ENCODE measurements at regions of chr11 and their contacts with region 1.

Region 1: GRCh38 chr11:45042557-45042956 is 91.9 kb upstream of the TP53I11 start:
- DNase-seq: peak in 9 of 10 donors; percentile 30 to 95 (median 69)

Region 2: DNA sequence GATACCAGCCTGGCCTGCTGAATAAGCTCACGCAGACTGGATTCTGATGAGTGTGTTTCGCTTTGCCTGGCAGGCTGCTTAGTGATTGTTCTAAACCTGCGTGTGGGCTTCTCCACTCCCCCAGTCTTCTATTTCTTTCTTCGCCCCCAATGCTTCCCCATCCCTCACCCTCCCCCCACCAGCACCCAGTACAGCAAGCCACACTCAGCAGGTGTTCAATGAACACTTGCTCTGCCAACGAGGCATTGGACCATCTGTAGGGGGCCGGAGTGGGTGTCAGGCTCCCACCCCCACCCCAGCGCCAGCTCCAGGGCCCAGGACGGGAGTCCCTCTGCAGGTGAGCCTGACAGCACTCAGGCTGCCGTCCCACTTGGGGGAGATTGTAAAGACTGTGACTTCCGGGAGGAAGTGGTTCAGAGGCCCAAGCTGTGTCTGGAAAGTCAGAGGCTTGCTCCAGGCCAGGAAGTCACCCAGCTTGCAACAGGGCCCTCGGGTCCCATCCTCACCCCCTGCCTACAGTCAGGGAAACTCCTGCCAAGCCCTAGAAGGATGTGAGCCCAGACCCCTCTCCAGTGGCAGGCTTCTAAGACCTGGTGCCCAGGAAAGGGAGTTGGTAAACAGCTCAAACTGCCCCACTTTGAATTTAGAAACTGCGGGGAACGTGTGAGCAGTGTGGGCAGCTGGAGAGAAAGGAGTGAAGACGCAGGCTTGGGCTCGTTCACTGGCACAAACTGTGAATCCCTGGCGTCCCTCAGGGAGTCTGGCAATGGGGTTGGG is 37.6 kb after region 1 on chr11:
- intact Hi-C with region 1: loop called (anchors 5 kb)
- DNase-seq: peak in 6 of 10 donors; percentile 31 to 92 (median 64)